Activated CD8-positive, alpha-beta T cell treated with anti-CD3 and anti-CD28 coated beads, Interleukin-2, amount 10 ng/mL, durations not matched to agents 7 days and 5 days (primary cell): ENCODE measurements at regions of chr3 and their contacts with region 1.

Region 1: DNA sequence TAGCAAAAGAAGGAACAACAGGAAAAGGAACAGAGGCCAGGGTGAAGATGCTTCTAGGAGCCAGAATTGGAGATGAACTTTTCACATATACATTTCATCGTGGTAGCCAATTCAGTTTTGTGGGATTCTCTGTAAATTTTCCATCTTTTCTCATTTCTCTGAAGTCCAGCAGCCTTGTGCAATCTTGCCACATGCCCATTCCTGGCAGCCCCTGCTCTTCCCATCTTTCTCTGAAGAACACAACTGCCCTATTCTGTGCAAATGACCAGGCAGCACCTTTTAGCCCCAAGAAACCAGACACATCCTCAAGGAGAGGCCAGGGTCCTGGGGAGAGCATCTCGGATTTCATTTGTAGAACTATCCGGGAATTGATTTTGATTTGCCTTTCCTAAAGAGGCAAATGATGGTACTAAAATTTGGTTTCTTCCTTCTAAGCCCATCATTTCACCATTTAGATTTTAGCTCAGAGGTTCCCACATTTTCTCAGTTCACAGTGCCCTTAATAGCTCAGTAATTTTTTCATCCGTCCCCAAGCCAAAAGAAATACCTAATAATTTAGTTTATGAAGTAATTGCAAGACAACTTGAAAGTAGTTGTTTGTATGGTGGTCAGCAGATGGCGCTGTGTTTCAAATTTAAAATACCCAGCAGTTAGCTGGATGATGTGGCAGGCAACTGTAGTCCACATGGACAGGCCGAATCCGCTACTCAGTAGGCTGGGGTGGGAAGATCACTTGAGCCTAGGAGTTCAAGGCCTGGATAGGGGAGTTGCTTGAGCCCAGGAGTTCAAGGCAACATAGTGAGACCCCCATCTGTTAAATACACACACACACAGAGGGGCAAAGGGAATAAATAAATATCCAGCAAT is 61.3 kb upstream of the ACKR4 start:
- DNase-seq: peak; percentile 70
- ATAC-seq: peak; percentile 68
- H3K4me3 Mint-ChIP-seq: no peak overlapping the region
- H3K27ac Mint-ChIP-seq: no peak overlapping the region
- H3K4me1 Mint-ChIP-seq: peaks cover 13% of the 10 kb centered on the region
- H3K27me3 Mint-ChIP-seq: no peaks in the 10 kb centered on the region

Region 2: GRCh38 chr3:132317229-132317948 is 218.4 kb before region 1 on chr3 and contains the start of gene ACP3:
- CTCF ChIA-PET with region 1: no interaction called
- POLR2A ChIA-PET with region 1: no interaction called
- DNase-seq: no peak
- ATAC-seq: no peak
- H3K4me3 Mint-ChIP-seq: no peak within 1 kb of the TSS
- H3K27ac Mint-ChIP-seq: no peak within 1 kb of the TSS
- H3K4me1 Mint-ChIP-seq: peaks cover 4% of the 10 kb centered on the region
- H3K27me3 Mint-ChIP-seq: peaks cover 8% of the 10 kb centered on the region
- total RNA-seq, gene ACP3: not detected

Region 3: DNA sequence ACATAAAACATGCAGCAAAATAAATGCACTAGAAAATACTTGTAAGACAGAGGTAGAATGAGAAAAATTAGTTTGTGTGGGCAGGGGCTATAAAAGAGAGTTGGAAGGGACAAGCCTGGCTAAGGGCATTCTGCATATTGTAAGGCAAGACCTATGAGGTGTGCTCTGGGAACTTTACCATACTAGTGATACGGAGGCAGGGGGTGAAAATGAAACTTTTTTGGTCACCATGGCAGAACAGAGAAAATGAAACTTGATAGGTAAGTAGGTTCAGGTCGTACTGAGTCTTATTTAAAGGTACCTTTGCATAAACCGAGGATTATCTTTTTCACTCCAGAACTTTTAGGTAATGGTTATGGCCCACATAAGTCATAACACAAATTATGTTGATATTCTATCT is 13.5 kb before region 1 on chr3:
- CTCF ChIA-PET with region 1: interaction called, 30 read pairs
- POLR2A ChIA-PET with region 1: no interaction called
- DNase-seq: no peak
- ATAC-seq: peak; percentile 65
- H3K4me3 Mint-ChIP-seq: peak overlapping the region; percentile 1
- H3K27ac Mint-ChIP-seq: peak overlapping the region; percentile 22
- H3K4me1 Mint-ChIP-seq: peaks cover 21% of the 10 kb centered on the region
- H3K27me3 Mint-ChIP-seq: no peaks in the 10 kb centered on the region

Region 4: DNA sequence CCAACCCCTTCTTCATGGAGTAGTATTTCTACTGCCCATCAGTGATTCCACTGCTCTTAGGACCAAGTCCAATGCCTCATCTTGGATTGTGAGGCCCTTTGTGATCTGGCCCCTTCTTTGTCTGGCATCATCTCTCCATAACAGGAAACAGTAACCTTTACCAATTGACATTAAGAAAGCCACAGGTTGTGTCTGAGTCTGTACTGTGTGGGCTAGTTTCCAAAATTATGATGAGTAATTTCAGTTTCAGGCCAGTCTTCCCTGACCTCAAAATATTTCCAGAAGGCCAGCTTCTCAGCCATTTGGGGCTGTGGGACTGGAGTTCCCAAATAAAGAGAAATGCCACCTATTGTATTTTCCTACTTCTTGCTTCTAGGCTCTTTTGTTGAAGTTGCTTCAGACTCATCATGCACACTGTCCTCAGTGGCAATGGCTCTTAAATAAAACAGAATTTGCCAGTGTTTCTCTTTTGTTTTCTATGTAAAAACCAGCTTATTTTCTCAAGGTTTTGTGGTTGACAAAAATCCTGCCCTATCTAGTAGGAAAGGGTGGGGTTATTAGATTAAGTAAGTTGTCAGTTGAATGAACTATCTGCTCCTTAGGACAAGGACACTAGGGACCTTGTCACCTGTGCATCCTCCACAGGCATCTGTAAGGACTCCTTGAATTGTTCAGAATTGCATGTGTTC is 14.2 kb after region 1 on chr3:
- CTCF ChIA-PET with region 1: interaction called, 43 read pairs
- POLR2A ChIA-PET with region 1: no interaction called
- DNase-seq: no peak
- ATAC-seq: peak; percentile 76
- H3K4me3 Mint-ChIP-seq: no peak overlapping the region
- H3K27ac Mint-ChIP-seq: peak overlapping the region; percentile 60
- H3K4me1 Mint-ChIP-seq: peaks cover 21% of the 10 kb centered on the region
- H3K27me3 Mint-ChIP-seq: no peaks in the 10 kb centered on the region

Region 5: GRCh38 chr3:132622761-132623160 is 87.0 kb after region 1 on chr3:
- CTCF ChIA-PET with region 1: interaction called, 13 read pairs
- POLR2A ChIA-PET with region 1: no interaction called
- DNase-seq: no peak
- ATAC-seq: no peak
- H3K4me3 Mint-ChIP-seq: no peak overlapping the region
- H3K27ac Mint-ChIP-seq: no peak overlapping the region
- H3K4me1 Mint-ChIP-seq: peaks cover 5% of the 10 kb centered on the region
- H3K27me3 Mint-ChIP-seq: no peaks in the 10 kb centered on the region

Region 6: DNA sequence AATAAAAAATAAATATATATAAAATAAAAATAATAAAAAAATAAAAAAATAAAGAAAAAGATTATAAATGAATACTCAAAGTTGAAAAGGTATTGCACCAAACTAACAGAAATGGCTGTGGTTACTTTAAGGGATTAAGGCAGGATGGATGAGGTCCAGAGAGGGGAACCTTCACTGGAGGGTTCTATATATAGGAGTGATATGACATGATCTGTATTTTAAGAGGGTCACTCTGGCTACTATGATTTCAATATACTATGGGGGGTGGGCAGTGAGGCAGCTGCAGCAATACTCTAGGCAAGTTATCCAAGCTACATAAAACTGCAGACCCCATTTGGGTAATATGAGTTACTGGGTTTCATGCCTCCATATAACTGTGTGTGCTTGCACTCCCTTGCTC is 99.2 kb after region 1 on chr3:
- CTCF ChIA-PET with region 1: interaction called, 204 read pairs
- POLR2A ChIA-PET with region 1: no interaction called
- DNase-seq: no peak
- ATAC-seq: no peak
- H3K4me3 Mint-ChIP-seq: no peak overlapping the region
- H3K27ac Mint-ChIP-seq: no peak overlapping the region
- H3K4me1 Mint-ChIP-seq: no peaks in the 10 kb centered on the region
- H3K27me3 Mint-ChIP-seq: no peaks in the 10 kb centered on the region

Region 7: GRCh38 chr3:132641837-132642538 is 106.2 kb after region 1 on chr3:
- CTCF ChIA-PET with region 1: interaction called, 204 read pairs
- POLR2A ChIA-PET with region 1: no interaction called
- DNase-seq: no peak
- ATAC-seq: peak; percentile 42
- H3K4me3 Mint-ChIP-seq: no peak overlapping the region
- H3K27ac Mint-ChIP-seq: no peak overlapping the region
- H3K4me1 Mint-ChIP-seq: peaks cover 10% of the 10 kb centered on the region
- H3K27me3 Mint-ChIP-seq: no peaks in the 10 kb centered on the region

Region 8: DNA sequence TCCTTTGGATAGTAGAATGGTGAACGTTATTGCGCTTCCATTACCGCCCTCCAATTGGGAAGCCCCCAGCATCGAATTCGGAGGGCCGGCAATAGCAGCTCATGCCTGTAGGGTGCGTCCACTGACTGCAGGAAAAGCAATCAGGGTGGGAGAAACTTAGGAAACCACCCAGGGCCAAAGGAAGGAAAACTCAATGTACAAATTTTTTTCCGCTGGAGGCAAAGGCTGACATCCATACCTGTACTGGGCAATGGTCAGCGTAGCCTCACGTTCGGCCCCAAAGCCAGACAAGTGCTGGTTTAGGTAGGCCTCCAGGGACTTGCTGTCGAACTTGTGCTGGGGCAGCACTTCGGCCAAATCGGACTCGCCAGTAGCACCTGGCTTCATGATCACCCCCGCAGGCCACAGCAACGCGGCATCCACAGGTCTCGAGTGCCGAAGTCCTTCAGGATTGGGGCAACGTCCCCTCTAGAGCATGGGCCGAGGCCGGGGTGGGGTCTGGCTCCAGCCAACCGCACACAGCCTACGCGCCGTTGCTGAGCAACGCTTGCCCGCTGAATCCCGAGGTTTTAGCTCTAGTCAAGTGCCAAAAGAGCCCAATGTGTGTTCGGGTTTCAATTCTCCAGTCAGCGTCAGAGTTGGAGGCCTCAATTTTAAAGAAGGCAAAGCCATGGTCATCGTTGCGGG is 123.7 kb after region 1 on chr3 and contains the start of gene ACAD11:
- CTCF ChIA-PET with region 1: interaction called, 20 read pairs
- POLR2A ChIA-PET with region 1: no interaction called
- DNase-seq: peak; percentile 46
- ATAC-seq: peak; percentile 49
- H3K4me3 Mint-ChIP-seq: peak within 1 kb of the TSS; percentile 95
- H3K27ac Mint-ChIP-seq: peak within 1 kb of the TSS; percentile 99
- H3K4me1 Mint-ChIP-seq: peaks cover 38% of the 10 kb centered on the region
- H3K27me3 Mint-ChIP-seq: no peaks in the 10 kb centered on the region
- total RNA-seq, gene ACAD11: 11.3 to 13.7 TPM